Naive thymus-derived CD4-positive, alpha-beta T cell (primary cell): ENCODE measurements at regions of chr14 and their contacts with region 1.

Region 1: GRCh38 chr14:24114536-24115450 is at the starts of genes DCAF11 and NRL:
- DNase-seq: peak; percentile 97 to 100 (median 100)
- ATAC-seq: peak; percentile 90
- H3K4me3 ChIP-seq: peak within 1 kb of the TSS; percentile 99
- H3K4me3 Mint-ChIP-seq: peak within 1 kb of the TSS; percentile 93 to 100 (median 96)
- H3K27ac ChIP-seq: peak within 1 kb of the TSS; percentile 93
- H3K27ac Mint-ChIP-seq: peak within 1 kb of the TSS; percentile 96 to 100 (median 99)
- H3K4me1 ChIP-seq: peaks cover 18 to 20% of the 10 kb centered on the region in 2 donors
- H3K4me1 Mint-ChIP-seq: peaks cover 18 to 44% (median 37%) of the 10 kb centered on the region in 7 donors
- H3K27me3 ChIP-seq: no peaks in the 10 kb centered on the region
- H3K27me3 Mint-ChIP-seq: peaks cover 0 to 3% (median 0%) of the 10 kb centered on the region in 5 donors
- total RNA-seq, gene DCAF11: 71.9 to 90.1 (median 83.3) TPM
- total RNA-seq, gene NRL: 2.1 to 4.5 (median 3.8) TPM

Region 2: DNA sequence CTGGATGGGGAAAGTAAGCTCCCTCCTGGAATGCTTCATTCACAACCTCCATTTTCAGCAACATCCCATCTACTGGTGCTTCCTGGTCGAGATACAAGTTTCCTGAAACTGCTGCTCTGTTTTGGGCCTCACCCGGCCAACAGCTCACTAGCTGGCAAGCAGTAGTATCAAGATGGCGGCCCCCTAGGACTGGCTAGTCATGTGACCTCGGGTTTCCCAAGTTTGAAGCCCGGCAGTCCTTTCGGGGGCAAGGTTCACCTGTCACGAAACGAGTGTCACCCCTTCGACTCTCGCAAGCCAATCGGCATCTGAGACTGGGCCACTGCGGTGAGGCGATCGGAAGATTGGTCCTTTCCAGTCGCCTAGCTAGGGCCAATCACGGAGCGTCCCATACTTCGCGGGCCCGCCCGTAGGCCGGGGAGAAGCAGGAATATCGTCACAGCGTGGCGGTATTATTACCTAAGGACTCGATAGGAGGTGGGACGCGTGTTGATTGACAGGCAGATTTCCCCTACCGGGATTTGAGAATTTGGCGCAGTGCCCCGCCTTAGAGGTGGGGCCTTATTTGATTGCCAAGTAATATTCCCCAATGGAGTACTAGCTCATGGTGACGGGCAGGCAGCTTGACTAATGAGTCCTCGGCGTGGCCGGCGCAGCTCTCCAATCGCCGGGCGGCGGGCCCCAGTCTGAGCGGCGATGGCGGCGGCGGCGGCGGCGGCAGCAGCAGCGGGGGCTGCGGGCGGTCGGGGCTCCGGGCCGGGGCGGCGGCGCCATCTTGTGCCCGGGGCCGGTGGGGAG is 793.8 kb before region 1 on chr14 and contains the start of gene PABPN1:
- CTCF ChIA-PET with region 1: no interaction called
- POLR2A ChIA-PET with region 1: interaction called, 5 read pairs
- intact Hi-C with region 1: loop called in 1 of 2 experiments (anchors 1 kb)
- DNase-seq: peak; percentile 87 to 100 (median 99)
- ATAC-seq: peak; percentile 91
- H3K4me3 ChIP-seq: peak within 1 kb of the TSS; percentile 84
- H3K4me3 Mint-ChIP-seq: peak within 1 kb of the TSS; percentile 91 to 97 (median 93)
- H3K27ac ChIP-seq: peak within 1 kb of the TSS; percentile 96
- H3K27ac Mint-ChIP-seq: peak within 1 kb of the TSS; percentile 96 to 99 (median 98)
- H3K4me1 ChIP-seq: peaks cover 22% of the 10 kb centered on the region in 2 donors
- H3K4me1 Mint-ChIP-seq: peaks cover 22 to 38% (median 32%) of the 10 kb centered on the region in 7 donors
- H3K27me3 ChIP-seq: no peaks in the 10 kb centered on the region
- H3K27me3 Mint-ChIP-seq: peaks cover 0 to 3% (median 0%) of the 10 kb centered on the region in 5 donors
- total RNA-seq, gene PABPN1: 176 to 213 (median 196) TPM

Region 3: DNA sequence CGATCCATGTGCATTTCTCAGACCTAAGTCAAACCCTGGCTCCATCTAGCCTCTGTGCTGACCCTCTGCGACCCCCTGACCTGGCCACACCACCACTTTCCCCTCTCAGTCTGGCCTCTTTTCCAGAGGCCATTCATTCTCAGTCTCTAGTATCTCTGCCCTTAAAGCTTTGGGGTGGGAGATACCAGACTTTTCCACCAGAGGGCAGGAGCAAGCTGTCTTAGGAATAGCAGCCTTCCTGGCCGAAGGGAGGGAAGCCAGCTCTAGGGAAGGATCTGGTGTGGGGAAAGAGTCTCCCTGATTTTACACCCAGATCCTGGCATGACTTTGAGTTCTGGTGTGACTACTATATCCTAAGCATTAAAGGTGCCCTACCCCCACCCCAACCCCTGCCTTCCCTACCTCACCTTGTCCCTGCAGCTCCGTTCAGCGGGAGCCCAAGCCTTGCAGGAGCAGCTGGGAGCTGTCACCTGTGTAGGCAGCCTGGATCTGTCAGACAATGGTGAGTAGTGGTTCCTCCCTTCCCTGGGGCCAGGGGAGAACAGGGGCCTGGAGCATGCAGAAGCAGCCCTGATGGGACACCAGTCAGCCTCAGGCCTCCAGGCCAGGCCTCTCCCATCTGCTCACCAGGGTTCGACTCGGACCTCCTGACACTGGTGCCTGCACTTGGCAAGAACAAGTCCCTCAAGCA is 56.4 kb before region 1 on chr14:
- CTCF ChIA-PET with region 1: interaction called, 246 read pairs
- POLR2A ChIA-PET with region 1: interaction called, 31 read pairs
- intact Hi-C with region 1: no loop called
- DNase-seq: peak; percentile 22 to 70 (median 49)
- ATAC-seq: peak; percentile 84
- H3K4me3 ChIP-seq: no peak overlapping the region
- H3K4me3 Mint-ChIP-seq: no peak overlapping the region
- H3K27ac ChIP-seq: no peak overlapping the region
- H3K27ac Mint-ChIP-seq: peak overlapping the region in 5 of 9 donors; percentile 22 to 80 (median 67)
- H3K4me1 ChIP-seq: no peaks in the 10 kb centered on the region
- H3K4me1 Mint-ChIP-seq: peaks cover 0 to 8% (median 2%) of the 10 kb centered on the region in 7 donors
- H3K27me3 ChIP-seq: no peaks in the 10 kb centered on the region
- H3K27me3 Mint-ChIP-seq: peaks cover 0 to 8% (median 2%) of the 10 kb centered on the region in 5 donors

Region 4: DNA sequence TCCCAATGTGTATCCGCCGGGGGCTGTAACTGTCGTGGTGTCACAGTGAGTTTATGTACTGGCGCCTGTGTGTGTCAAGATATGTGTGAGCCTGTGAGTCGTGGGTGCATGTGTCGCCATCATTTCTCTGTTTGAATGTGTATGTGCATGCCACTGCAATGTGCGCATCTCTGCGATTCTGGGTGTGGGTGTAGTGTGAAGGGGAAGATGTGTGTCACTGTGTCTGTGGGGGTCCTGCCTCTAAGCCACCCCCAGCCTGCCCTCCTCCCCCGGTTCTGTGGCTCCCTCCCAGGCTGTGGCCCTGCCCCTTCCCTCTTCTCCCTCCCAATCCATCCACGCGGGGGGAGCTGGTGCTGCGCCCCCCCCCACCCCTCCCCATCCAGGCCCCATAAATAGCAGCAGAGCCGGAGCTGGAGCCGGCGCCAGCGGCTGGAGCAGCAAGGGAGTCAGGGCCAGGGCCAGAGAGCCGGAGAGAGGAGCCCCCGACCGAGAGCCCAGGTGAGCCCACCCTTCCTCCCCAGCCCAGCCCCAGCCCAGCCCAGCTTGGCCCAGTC is 43.6 kb before region 1 on chr14 and contains the start of gene CPNE6:
- CTCF ChIA-PET with region 1: no interaction called
- POLR2A ChIA-PET with region 1: no interaction called
- intact Hi-C with region 1: no loop called
- DNase-seq: peak in 1 of 9 donors; percentile 48
- ATAC-seq: no peak
- H3K4me3 ChIP-seq: no peak within 1 kb of the TSS
- H3K4me3 Mint-ChIP-seq: no peak within 1 kb of the TSS
- H3K27ac ChIP-seq: no peak within 1 kb of the TSS
- H3K27ac Mint-ChIP-seq: no peak within 1 kb of the TSS
- H3K4me1 ChIP-seq: no peaks in the 10 kb centered on the region
- H3K4me1 Mint-ChIP-seq: peaks cover 0 to 8% (median 0%) of the 10 kb centered on the region in 7 donors
- H3K27me3 ChIP-seq: no peaks in the 10 kb centered on the region
- H3K27me3 Mint-ChIP-seq: peaks cover 0 to 13% (median 5%) of the 10 kb centered on the region in 5 donors
- total RNA-seq, gene CPNE6: 0.12 TPM in 1 of 5 experiments, not detected in the others

Region 5: DNA sequence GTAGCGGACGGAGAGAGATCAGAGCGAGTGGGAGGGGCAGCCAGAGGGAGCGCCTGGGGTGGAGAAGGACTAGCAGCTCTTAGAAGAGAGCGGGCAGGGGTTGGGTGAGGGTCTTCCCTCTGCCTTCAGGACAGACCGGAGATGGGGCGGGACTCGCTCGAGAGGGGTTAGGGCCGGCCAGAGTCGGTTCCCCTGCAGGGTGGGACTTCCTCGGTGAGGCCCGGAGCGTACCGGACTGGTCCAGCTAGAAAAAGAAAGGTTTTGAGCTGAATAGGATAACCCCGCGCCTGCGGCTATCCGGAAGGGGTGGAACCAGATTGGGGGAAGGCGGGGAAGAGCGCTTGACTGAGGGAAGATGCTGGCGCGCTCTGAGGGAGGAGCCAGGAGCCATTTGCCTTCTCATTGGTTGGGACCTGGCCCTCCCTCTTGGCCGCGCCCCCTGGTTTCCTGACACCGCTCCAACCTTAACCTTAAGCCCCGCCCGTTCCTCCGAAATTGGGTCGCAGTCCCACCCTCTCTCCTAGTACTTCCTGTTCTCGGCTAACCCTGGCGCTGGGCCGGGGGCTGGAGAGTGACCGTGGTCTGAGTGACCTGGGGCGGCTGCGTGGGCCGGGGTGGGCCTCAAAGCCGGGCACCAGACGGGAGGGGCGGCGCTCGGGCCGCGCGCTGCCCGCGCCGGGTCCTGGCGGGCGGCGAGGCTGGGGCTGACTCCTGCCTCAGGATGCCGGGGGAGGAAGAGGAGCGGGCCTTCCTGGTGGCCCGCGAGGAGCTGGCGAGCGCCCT is 32.4 kb after region 1 on chr14 and contains the start of gene RNF31:
- CTCF ChIA-PET with region 1: interaction called, 8 read pairs
- POLR2A ChIA-PET with region 1: interaction called, 87 read pairs
- intact Hi-C with region 1: loop called (anchors 1 kb)
- DNase-seq: peak; percentile 88 to 98 (median 96)
- ATAC-seq: peak; percentile 95
- H3K4me3 ChIP-seq: peak within 1 kb of the TSS; percentile 98
- H3K4me3 Mint-ChIP-seq: peak within 1 kb of the TSS; percentile 91 to 100 (median 98)
- H3K27ac ChIP-seq: peak within 1 kb of the TSS; percentile 88
- H3K27ac Mint-ChIP-seq: peak within 1 kb of the TSS; percentile 94 to 98 (median 96)
- H3K4me1 ChIP-seq: peaks cover 35 to 47% of the 10 kb centered on the region in 2 donors
- H3K4me1 Mint-ChIP-seq: peaks cover 39 to 73% (median 61%) of the 10 kb centered on the region in 7 donors
- H3K27me3 ChIP-seq: no peaks in the 10 kb centered on the region
- H3K27me3 Mint-ChIP-seq: no peaks in the 10 kb centered on the region
- total RNA-seq, gene RNF31: 64.0 to 151 (median 95.4) TPM

Region 6: GRCh38 chr14:24232121-24232644 is 117.4 kb after region 1 on chr14 and contains the start of gene NEDD8:
- CTCF ChIA-PET with region 1: no interaction called
- POLR2A ChIA-PET with region 1: interaction called, 3 read pairs
- intact Hi-C with region 1: loop called (anchors 1 to 2 kb)
- DNase-seq: peak; percentile 72 to 91 (median 88)
- ATAC-seq: peak; percentile 91
- H3K4me3 ChIP-seq: peak within 1 kb of the TSS; percentile 99
- H3K4me3 Mint-ChIP-seq: peak within 1 kb of the TSS; percentile 86 to 100 (median 96)
- H3K27ac ChIP-seq: peak within 1 kb of the TSS; percentile 89
- H3K27ac Mint-ChIP-seq: peak within 1 kb of the TSS; percentile 89 to 98 (median 93)
- H3K4me1 ChIP-seq: peaks cover 11 to 27% of the 10 kb centered on the region in 2 donors
- H3K4me1 Mint-ChIP-seq: peaks cover 36 to 79% (median 63%) of the 10 kb centered on the region in 7 donors
- H3K27me3 ChIP-seq: no peaks in the 10 kb centered on the region
- H3K27me3 Mint-ChIP-seq: no peaks in the 10 kb centered on the region
- total RNA-seq, gene NEDD8: 73.5 to 175 (median 106) TPM

Region 7: GRCh38 chr14:24431569-24432258 is 316.9 kb after region 1 on chr14:
- CTCF ChIA-PET with region 1: no interaction called
- POLR2A ChIA-PET with region 1: interaction called, 8 read pairs
- intact Hi-C with region 1: loop called (anchors 1 kb)
- DNase-seq: peak; percentile 76 to 91 (median 86)
- ATAC-seq: peak; percentile 77
- H3K4me3 ChIP-seq: peak overlapping the region; percentile 96
- H3K4me3 Mint-ChIP-seq: peak overlapping the region; percentile 82 to 96 (median 91)
- H3K27ac ChIP-seq: peak overlapping the region; percentile 99
- H3K27ac Mint-ChIP-seq: peak overlapping the region; percentile 51 to 97 (median 96)
- H3K4me1 ChIP-seq: peaks cover 24 to 41% of the 10 kb centered on the region in 2 donors
- H3K4me1 Mint-ChIP-seq: peaks cover 19 to 59% (median 53%) of the 10 kb centered on the region in 7 donors
- H3K27me3 ChIP-seq: no peaks in the 10 kb centered on the region
- H3K27me3 Mint-ChIP-seq: no peaks in the 10 kb centered on the region

Region 8: GRCh38 chr14:24634158-24634557 is 519.4 kb after region 1 on chr14 and contains the start of gene GZMB:
- CTCF ChIA-PET with region 1: no interaction called
- POLR2A ChIA-PET with region 1: no interaction called
- intact Hi-C with region 1: no loop called
- DNase-seq: peak in 1 of 9 donors; percentile 75
- ATAC-seq: peak; percentile 88
- H3K4me3 ChIP-seq: no peak within 1 kb of the TSS
- H3K4me3 Mint-ChIP-seq: peak within 1 kb of the TSS in 3 of 10 donors; percentile 45 to 96 (median 85)
- H3K27ac ChIP-seq: no peak within 1 kb of the TSS
- H3K27ac Mint-ChIP-seq: peak within 1 kb of the TSS in 2 of 9 donors; percentile 7 to 95
- H3K4me1 ChIP-seq: peaks cover 0 to 11% of the 10 kb centered on the region in 2 donors
- H3K4me1 Mint-ChIP-seq: peaks cover 0 to 62% (median 0%) of the 10 kb centered on the region in 7 donors
- H3K27me3 ChIP-seq: no peaks in the 10 kb centered on the region
- H3K27me3 Mint-ChIP-seq: peaks cover 0 to 5% (median 0%) of the 10 kb centered on the region in 5 donors
- total RNA-seq, gene GZMB: 1.00 to 692 (median 20.3) TPM